Right ventricle myocardium superior (tissue), 1 donor: ENCODE measurements at regions of chr1 and their contacts with region 1.

Region 1: GRCh38 chr1:27979151-27979858 is 19.5 kb downstream of the XKR8 start:
- DNase-seq: no peak
- ATAC-seq: peak; percentile 79

Region 2: GRCh38 chr1:27862651-27863537 is 116.4 kb before region 1 on chr1:
- intact Hi-C with region 1: loop called (anchors 10 kb)
- DNase-seq: peak; percentile 59
- ATAC-seq: peak; percentile 86

Region 3: GRCh38 chr1:28458237-28459228 is 479.2 kb after region 1 on chr1:
- intact Hi-C with region 1: no loop called
- DNase-seq: no peak
- ATAC-seq: no peak